OCI-LY7 (cell line): ENCODE measurements at regions of chr5 and their contacts with region 1.

Region 1: GRCh38 chr5:73201547-73202513 is 28.8 kb downstream of the TMEM174 start:
- DNase-seq: peak; percentile 71
- H3K4me3 ChIP-seq: no peak overlapping the region
- H3K27ac ChIP-seq: no peak overlapping the region
- H3K4me1 ChIP-seq: peaks cover 7% of the 10 kb centered on the region
- CTCF ChIP-seq: peak; percentile 87

Region 2: DNA sequence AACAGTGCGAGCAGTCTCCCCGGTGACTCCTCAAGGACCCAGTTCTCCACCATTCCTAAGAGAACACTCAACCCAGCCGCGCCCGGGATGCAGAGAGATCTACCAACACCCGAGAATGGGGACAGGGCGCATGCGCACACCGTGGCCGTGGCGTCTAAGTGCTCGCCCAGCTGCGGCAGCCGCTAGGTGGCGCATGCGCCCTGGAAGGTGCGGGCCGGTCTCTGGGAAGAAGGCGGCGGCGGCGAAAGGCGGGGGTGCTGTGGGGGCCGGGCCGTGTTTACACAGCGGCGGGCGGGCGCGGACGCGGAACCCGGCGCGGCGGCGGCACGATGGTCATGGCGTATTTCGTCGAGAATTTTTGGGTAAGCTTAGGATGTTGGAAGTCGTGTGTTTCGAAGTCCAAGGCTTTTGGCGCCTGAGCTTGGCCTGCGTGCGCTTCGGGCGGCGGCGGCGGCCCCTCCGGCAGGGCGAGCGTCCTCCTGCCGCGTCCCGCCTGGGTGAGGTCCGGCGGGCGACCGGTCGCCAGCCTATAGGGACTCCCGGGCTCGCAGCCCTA is 246.0 kb before region 1 on chr5 and contains the start of gene FCHO2:
- CTCF ChIA-PET with region 1: no interaction called
- POLR2A ChIA-PET with region 1: no interaction called
- intact Hi-C with region 1: loop called (anchors 5 kb)
- DNase-seq: peak; percentile 95
- H3K4me3 ChIP-seq: peak within 1 kb of the TSS; percentile 77
- H3K27ac ChIP-seq: no peak within 1 kb of the TSS
- H3K4me1 ChIP-seq: peaks cover 18% of the 10 kb centered on the region
- CTCF ChIP-seq: peak; percentile 83
- total RNA-seq, gene FCHO2: 3.4 and 7.8 TPM in 2 replicates

Region 3: DNA sequence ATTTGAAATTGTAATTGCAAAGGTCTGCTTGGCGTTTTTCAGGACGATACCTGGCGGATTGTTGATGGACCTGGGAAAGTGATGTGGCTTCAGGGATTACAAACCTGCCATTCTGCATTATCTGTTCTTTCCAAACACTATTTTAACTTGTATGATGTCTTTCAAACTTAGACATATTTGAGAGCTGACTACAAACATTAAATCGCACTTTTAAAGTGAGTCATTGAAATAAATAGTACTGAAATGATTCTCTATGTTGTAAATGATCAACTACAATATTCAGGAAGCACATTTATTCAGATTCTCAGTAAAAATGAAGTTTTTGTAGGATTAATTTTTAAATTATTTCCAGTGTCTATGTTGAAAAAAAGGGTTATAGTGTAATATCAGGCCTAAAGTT is 113.8 kb before region 1 on chr5:
- CTCF ChIA-PET with region 1: no interaction called
- POLR2A ChIA-PET with region 1: interaction called, 3 read pairs
- intact Hi-C with region 1: loop called (anchors 1 kb)
- DNase-seq: no peak
- H3K4me3 ChIP-seq: no peak overlapping the region
- H3K27ac ChIP-seq: no peak overlapping the region
- H3K4me1 ChIP-seq: no peaks in the 10 kb centered on the region
- CTCF ChIP-seq: no peak

Region 4: DNA sequence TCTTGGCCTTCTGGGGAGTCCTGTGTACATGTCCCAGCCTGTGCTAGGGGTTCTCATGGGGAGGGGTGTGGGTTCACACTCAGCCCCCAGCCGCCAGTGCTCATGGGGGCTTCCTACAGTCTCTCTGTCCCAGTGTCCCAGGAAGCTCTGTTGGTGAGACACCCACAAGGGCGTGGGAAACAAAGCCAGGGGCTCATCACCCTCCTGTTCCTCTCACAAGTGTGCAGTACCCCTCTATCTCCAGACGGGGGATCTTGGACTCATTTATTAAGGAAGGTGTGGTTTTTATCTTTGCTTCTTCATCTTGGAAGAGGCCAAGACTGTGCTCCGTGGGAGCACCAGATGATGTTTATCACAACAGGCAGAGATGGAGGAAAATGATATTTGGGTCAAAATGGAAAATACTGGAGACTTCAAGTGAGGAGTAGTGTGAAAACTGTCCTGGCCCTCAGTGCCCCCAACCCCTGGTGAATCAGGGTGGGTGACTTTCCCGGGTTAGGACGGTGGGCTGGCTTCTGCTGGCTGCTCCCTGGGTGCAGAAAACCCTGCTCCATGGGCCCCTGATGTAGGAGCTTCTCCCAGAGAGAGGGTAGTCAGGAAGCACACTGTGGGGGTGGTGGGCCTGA is 66.3 kb before region 1 on chr5:
- CTCF ChIA-PET with region 1: interaction called, 5 read pairs
- POLR2A ChIA-PET with region 1: interaction called, 4 read pairs
- intact Hi-C with region 1: loop called (anchors 1 kb)
- DNase-seq: peak; percentile 70
- H3K4me3 ChIP-seq: no peak overlapping the region
- H3K27ac ChIP-seq: no peak overlapping the region
- H3K4me1 ChIP-seq: no peaks in the 10 kb centered on the region
- CTCF ChIP-seq: peak; percentile 80

Region 5: GRCh38 chr5:73189871-73190376 is 11.9 kb before region 1 on chr5:
- CTCF ChIA-PET with region 1: no interaction called
- POLR2A ChIA-PET with region 1: no interaction called
- intact Hi-C with region 1: no loop called
- DNase-seq: peak; percentile 23
- H3K4me3 ChIP-seq: no peak overlapping the region
- H3K27ac ChIP-seq: no peak overlapping the region
- H3K4me1 ChIP-seq: no peaks in the 10 kb centered on the region
- CTCF ChIP-seq: no peak

Region 6: DNA sequence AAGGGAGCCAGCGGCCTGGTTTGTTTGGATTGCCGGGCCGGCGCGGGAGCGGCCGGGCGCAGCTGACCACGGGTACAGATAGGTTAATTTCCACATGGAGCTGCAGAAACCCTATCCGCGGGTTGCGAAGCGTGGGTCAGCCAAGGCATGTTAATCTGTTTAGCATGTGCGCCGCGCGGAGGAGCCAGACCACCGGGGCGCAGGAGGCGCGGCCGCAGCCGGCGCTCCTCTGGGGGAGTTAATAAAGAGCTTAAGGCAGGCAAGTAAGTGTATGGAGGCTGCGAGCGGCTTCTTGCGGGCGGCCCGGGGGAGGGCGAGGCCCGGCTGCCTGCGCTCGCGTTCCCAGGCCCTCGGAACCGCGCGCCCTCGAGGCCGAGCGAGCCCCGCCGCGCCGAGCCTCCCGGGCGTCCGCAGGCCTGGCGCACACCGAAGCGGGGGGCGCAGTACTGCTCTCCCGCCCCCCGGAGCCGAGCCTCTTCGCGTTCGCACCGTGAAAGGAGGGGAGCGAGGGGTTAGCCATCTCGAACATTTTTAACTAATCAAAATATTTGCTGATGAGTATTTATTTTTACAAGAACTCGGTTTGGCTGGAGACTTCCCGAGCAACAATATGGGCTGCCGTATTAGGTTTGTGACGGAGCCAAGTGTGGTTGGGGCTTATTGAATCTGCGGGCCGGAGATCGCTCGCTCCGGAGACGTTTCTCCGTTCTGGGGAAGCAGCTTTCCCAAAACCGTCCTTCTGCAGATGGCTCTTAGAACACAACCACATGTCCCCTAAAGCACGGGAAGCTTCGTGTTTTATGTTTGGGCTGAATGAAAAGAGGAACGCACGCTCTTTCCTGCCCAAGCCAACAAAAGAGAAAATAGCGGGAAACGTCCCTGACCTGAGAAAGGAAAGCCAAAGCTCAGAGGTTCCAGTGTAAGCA is 217.9 kb after region 1 on chr5:
- CTCF ChIA-PET with region 1: no interaction called
- POLR2A ChIA-PET with region 1: no interaction called
- intact Hi-C with region 1: no loop called
- DNase-seq: no peak
- H3K4me3 ChIP-seq: no peak overlapping the region
- H3K27ac ChIP-seq: no peak overlapping the region
- H3K4me1 ChIP-seq: no peaks in the 10 kb centered on the region
- CTCF ChIP-seq: no peak